CD4-positive, alpha-beta memory T cell (primary cell): ENCODE measurements at regions of chr3 and their contacts with region 1.

Region 1: DNA sequence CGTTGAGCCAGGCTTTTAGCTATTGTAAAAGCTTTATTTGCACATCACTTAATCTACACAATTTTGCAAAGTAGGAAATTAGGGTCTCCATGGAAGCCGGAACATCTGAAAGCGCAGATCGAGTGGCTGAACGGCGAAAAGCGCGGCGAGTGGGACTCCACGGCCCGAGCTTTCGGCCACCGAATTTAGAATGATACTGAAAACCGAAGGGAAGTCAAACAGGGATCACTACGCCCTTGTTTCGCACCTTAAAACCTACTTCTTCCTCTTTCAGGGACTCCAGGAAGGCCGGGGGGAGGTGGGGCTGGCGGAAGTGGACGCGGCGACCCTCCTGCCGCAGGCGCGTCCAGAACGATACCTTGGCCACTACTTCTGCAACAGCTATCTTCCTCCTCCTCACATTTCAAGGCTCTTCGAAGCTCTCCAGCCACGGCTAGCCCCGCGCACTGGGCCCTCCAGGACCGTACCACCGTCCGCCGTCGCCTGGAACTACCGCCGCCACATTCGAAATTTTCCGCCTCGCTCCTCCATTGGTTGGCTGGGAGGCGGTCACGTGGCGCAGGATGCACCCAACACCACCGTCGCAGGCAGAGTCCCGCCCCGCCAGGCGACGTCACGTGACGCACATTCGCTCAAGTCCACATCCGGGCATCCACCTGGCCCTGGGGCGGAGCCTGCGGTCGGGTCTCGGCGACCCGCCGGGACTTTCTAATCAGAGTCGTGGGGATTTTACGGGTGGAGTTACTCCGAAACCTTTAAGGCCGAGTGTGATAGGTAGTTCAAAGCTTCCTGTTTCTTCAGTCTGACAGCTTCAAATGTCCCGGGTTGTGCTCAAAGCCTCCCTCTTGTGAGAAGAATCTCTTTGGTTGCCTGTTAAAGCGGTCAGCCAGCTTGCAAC is at the start of gene SGO1:
- DNase-seq: peak; percentile 99 to 100 (median 100)
- H3K4me3 ChIP-seq: peak within 1 kb of the TSS; percentile 69 to 92
- H3K4me3 Mint-ChIP-seq: no peak within 1 kb of the TSS
- H3K27ac ChIP-seq: peak within 1 kb of the TSS; percentile 93
- H3K27ac Mint-ChIP-seq: no peak within 1 kb of the TSS
- H3K4me1 ChIP-seq: peaks cover 28% of the 10 kb centered on the region
- H3K4me1 Mint-ChIP-seq: peaks cover 0 to 3% (median 0%) of the 10 kb centered on the region in 4 donors
- H3K27me3 ChIP-seq: no peaks in the 10 kb centered on the region
- H3K27me3 Mint-ChIP-seq: no peaks in the 10 kb centered on the region
- total RNA-seq, gene SGO1: 0.38 to 0.55 TPM

Region 2: DNA sequence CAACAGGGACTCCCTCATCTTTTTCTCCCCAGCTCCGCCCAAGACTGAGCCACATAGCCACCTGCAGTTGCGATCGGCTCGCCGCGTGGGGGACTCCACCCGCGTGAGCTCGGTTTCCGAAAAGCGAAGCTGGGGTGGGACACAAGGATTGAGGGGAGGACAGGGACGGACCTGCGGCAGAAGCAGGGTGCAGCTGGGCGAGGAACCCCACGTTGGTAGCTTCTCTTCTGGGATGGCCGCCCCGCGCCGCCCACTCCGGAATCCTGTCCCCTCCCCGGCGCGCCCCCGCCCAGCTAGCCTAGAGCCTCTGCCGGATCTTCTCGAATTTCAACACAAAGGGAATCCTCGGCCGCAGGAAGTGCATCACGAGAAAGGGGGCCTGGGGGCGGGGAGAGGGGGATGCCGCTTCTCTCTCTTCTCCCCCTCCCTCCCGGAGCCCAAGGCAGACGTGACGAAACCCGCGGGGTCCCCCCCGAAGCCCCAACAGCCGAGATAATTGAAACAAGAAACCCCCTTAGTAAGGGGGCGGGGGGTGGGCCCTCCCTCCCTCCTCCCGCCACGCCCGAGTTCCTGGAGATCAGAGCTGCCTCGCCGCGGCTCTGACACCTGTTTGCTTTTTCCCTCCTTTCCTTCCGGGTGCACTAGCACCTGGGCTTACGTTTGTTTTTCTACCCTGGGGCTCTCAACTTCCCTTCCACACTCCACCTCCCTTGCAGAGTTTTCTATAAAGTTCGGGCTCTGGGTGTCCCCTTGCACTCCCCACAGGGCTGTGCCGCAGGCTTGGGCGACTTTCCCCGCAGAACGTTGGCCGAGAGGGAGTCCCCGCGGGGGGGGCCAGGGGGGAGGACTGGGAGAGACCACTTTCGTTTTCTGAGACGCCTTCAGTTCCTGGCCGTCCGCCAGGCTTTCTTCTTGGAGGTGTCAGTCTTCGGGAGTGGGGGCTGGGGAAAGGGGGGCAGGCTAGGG is 1039.0 kb before region 1 on chr3:
- CTCF ChIA-PET with region 1: no interaction called
- POLR2A ChIA-PET with region 1: no interaction called
- intact Hi-C with region 1: loop called (anchors 2 kb)
- DNase-seq: peak; percentile 43 to 83 (median 55)
- H3K4me3 ChIP-seq: peak overlapping the region; percentile 32 to 72
- H3K4me3 Mint-ChIP-seq: peak overlapping the region; percentile 87 to 94 (median 92)
- H3K27ac ChIP-seq: no peak overlapping the region
- H3K27ac Mint-ChIP-seq: peak overlapping the region; percentile 34 to 87 (median 65)
- H3K4me1 ChIP-seq: peaks cover 22% of the 10 kb centered on the region
- H3K4me1 Mint-ChIP-seq: peaks cover 12 to 28% (median 17%) of the 10 kb centered on the region in 4 donors
- H3K27me3 ChIP-seq: peaks cover 7% of the 10 kb centered on the region
- H3K27me3 Mint-ChIP-seq: peaks cover 18 to 19% of the 10 kb centered on the region in 2 donors

Region 3: DNA sequence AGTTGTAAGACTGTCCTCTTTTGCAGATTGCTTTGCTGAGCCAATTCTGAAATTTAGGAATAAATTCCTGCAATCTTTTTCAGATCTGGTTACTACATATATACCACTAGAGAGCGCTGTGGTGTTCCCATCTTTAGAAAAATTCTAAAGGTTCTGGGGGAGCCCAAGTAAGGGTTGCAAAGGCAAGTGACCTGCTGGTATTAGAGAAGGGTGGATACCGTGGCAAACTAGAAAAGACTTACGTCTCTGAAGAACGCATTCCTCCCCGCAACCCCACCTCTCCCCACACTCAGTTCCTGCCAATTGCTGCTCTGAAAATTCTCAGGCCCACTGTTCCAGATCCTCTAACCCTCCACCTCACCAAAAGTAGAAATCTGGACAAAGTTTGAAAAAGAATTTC is 300.5 kb before region 1 on chr3:
- CTCF ChIA-PET with region 1: no interaction called
- POLR2A ChIA-PET with region 1: no interaction called
- intact Hi-C with region 1: loop called (anchors 1 kb)
- DNase-seq: peak in 4 of 5 donors; percentile 9 to 22 (median 18)
- H3K4me3 ChIP-seq: no peak overlapping the region
- H3K4me3 Mint-ChIP-seq: no peak overlapping the region
- H3K27ac ChIP-seq: no peak overlapping the region
- H3K27ac Mint-ChIP-seq: no peak overlapping the region
- H3K4me1 ChIP-seq: no peaks in the 10 kb centered on the region
- H3K4me1 Mint-ChIP-seq: no peaks in the 10 kb centered on the region
- H3K27me3 ChIP-seq: no peaks in the 10 kb centered on the region
- H3K27me3 Mint-ChIP-seq: peaks cover 0 to 2% of the 10 kb centered on the region in 2 donors

Region 4: DNA sequence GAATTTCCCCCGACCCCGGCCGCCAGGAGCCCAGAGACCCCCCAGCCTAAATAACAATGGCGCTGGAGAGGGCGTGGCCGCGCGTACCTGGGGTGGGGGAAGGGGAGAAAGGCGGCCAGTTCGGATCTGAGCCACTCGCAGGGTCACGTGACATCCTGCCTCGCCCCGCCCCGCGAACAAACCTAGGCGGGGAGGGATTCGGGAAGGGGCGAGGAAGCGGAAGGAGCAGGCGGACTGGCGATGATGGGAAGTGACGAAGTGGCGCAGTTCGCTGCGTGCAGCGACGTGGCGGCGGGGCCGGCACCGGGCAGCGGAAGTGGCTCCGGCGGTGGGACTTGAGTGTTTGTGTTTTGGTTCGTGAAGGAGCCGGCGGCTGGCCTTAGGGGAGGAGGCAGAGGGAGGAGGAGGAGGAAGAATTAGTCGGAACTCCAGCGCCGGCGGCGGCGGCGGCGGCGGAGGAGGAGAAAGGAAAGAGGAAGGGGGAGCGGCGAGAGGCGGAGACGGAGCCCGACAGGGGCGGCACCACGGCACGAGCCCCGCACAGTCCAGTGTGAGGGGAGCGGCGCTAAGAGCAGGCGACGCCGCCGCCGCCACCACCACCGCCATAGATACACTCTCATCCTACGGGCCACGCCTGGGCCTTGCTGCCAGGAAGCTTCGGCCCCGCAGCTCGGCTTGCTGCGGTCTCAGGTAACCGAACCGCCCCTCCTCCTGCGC is 239.0 kb before region 1 on chr3 and contains the start of gene RAB5A:
- CTCF ChIA-PET with region 1: no interaction called
- POLR2A ChIA-PET with region 1: interaction called, 14 read pairs
- intact Hi-C with region 1: loop called (anchors 1 kb)
- DNase-seq: peak; percentile 96 to 98 (median 96)
- H3K4me3 ChIP-seq: peak within 1 kb of the TSS; percentile 50 to 79
- H3K4me3 Mint-ChIP-seq: peak within 1 kb of the TSS; percentile 96 to 100 (median 99)
- H3K27ac ChIP-seq: peak within 1 kb of the TSS; percentile 98
- H3K27ac Mint-ChIP-seq: peak within 1 kb of the TSS; percentile 97 to 100 (median 99)
- H3K4me1 ChIP-seq: peaks cover 48% of the 10 kb centered on the region
- H3K4me1 Mint-ChIP-seq: peaks cover 32 to 68% (median 47%) of the 10 kb centered on the region in 4 donors
- H3K27me3 ChIP-seq: no peaks in the 10 kb centered on the region
- H3K27me3 Mint-ChIP-seq: no peaks in the 10 kb centered on the region
- total RNA-seq, gene RAB5A: 57.0 to 57.1 TPM

Region 5: DNA sequence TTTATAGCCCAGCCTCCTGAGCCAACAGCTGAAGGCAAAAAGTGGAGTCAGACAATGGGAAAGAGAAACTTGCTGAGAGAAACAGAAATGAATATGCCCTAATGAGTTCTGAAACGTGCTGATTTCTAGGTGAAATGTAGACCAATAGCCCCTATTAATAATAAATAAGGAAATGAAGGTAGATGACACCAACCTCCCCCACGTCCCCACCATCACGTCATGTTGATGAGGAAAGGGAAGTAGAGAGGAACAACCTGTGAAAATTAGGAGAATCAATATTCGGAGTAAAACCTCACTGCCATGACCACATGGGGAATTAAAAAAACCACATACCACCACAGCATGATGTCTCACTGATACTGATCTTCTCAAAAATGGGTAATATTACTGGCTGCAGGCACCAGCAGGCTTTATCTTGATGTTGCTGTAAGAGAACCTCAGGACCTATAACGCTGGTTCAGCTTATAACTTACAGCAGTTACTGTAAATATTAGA is 81.7 kb before region 1 on chr3:
- CTCF ChIA-PET with region 1: no interaction called
- POLR2A ChIA-PET with region 1: no interaction called
- intact Hi-C with region 1: loop called (anchors 5 kb)
- DNase-seq: peak; percentile 59 to 77 (median 77)
- H3K4me3 ChIP-seq: no peak overlapping the region
- H3K4me3 Mint-ChIP-seq: peak overlapping the region; percentile 43 to 94 (median 74)
- H3K27ac ChIP-seq: peak overlapping the region; percentile 56
- H3K27ac Mint-ChIP-seq: peak overlapping the region; percentile 91 to 98 (median 94)
- H3K4me1 ChIP-seq: peaks cover 95% of the 10 kb centered on the region
- H3K4me1 Mint-ChIP-seq: peaks cover 50 to 92% (median 63%) of the 10 kb centered on the region in 4 donors
- H3K27me3 ChIP-seq: no peaks in the 10 kb centered on the region
- H3K27me3 Mint-ChIP-seq: no peaks in the 10 kb centered on the region

Region 6: DNA sequence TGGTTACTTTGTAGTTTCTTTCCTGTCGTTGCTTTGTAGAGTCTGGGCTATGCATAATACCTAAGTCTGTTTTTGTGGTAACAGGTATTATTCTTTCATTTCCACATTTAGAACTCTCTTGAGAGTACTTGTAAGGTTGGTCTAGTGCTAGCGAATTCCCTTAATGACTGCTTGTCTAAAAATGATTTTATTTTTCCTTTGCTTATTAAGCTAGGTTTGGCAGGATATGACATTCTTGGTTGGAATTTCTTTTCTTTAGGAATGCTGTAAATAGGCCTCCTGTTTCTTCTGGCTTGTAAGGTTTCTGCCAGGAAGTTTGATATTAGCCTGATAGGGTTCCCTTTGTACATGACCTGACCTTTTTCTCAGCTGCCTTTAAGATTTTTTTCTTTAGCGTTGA is 70.2 kb after region 1 on chr3:
- CTCF ChIA-PET with region 1: no interaction called
- POLR2A ChIA-PET with region 1: no interaction called
- intact Hi-C with region 1: no loop called
- DNase-seq: no peak
- H3K4me3 ChIP-seq: no peak overlapping the region
- H3K4me3 Mint-ChIP-seq: no peak overlapping the region
- H3K27ac ChIP-seq: no peak overlapping the region
- H3K27ac Mint-ChIP-seq: no peak overlapping the region
- H3K4me1 ChIP-seq: no peaks in the 10 kb centered on the region
- H3K4me1 Mint-ChIP-seq: peaks cover 0 to 2% (median 0%) of the 10 kb centered on the region in 4 donors
- H3K27me3 ChIP-seq: no peaks in the 10 kb centered on the region
- H3K27me3 Mint-ChIP-seq: no peaks in the 10 kb centered on the region